Naive thymus-derived CD4-positive, alpha-beta T cell (primary cell): ENCODE measurements at regions of chr2 and their contacts with region 1.

Region 1: DNA sequence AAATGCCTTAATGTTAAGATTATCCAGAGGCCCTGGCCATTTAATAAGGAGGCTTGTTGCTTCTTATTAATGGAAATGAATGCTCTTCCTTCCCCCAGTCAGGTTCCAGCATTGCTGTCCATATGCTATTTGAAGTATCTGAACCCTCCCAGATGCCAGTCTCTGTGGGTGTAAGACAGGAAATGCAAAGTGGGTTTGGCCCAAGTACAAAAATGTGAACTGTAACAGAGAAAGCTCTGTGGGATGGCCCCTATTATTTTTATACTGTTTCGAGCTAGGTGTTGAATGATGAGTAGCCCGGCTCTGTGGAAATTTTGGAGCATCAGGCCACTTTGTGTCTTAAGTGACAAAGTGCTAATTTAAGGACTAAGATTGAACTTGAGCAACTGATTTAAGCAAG is 141.0 kb downstream of the UXS1 start:
- DNase-seq: peak in 5 of 9 donors; percentile 21 to 39 (median 33)
- ATAC-seq: peak; percentile 67
- H3K4me3 ChIP-seq: peak overlapping the region; percentile 28
- H3K4me3 Mint-ChIP-seq: peak overlapping the region in 9 of 10 donors; percentile 10 to 82 (median 74)
- H3K27ac ChIP-seq: no peak overlapping the region
- H3K27ac Mint-ChIP-seq: peak overlapping the region in 7 of 9 donors; percentile 17 to 77 (median 53)
- H3K4me1 ChIP-seq: peaks cover 45 to 64% of the 10 kb centered on the region in 2 donors
- H3K4me1 Mint-ChIP-seq: peaks cover 44 to 83% (median 76%) of the 10 kb centered on the region in 7 donors
- H3K27me3 ChIP-seq: no peaks in the 10 kb centered on the region
- H3K27me3 Mint-ChIP-seq: peaks cover 0 to 5% (median 0%) of the 10 kb centered on the region in 5 donors

Region 2: DNA sequence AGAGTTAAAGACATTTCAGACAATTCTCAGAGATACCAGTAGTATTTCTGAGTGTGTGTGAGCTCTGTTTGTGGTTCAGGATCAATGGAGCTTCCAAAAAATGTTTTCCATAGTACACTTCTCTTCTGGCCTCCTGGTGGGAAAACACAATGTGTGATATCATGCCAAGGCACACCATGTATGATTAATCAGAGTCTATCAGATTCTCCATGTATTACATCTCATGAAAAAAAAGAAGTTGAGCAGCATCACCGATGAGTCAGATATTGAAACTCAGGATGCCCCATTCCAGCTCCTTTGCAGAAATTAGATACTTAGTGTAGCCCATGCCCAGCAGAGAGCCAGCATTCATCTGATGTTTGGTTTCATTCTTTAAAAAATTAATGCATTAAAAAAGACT is 1819.5 kb before region 1 on chr2:
- CTCF ChIA-PET with region 1: no interaction called
- POLR2A ChIA-PET with region 1: no interaction called
- intact Hi-C with region 1: no loop called
- DNase-seq: no peak
- ATAC-seq: no peak
- H3K4me3 ChIP-seq: no peak overlapping the region
- H3K4me3 Mint-ChIP-seq: no peak overlapping the region
- H3K27ac ChIP-seq: no peak overlapping the region
- H3K27ac Mint-ChIP-seq: no peak overlapping the region
- H3K4me1 ChIP-seq: no peaks in the 10 kb centered on the region
- H3K4me1 Mint-ChIP-seq: no peaks in the 10 kb centered on the region
- H3K27me3 ChIP-seq: no peaks in the 10 kb centered on the region
- H3K27me3 Mint-ChIP-seq: no peaks in the 10 kb centered on the region

Region 3: DNA sequence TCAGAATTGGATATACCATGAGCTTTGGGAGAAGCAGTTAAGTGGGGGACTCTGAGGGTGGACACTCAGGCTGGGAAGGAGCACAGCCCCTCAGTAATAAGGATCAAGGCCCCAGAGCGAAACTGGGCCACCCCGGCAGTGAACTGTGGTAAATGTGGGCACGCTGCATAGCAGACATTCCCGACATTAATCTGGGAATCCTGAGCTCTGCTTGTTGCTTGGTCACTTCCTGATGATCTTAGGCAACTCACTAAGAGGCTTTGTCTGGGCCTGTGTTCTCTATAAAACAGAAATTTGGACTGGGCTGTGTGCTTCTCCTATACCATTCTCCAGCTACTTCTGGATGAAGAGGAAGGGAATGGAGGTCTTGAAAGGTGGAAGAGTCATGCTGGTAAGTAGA is 728.4 kb before region 1 on chr2:
- CTCF ChIA-PET with region 1: no interaction called
- POLR2A ChIA-PET with region 1: no interaction called
- intact Hi-C with region 1: no loop called
- DNase-seq: no peak
- ATAC-seq: no peak
- H3K4me3 ChIP-seq: no peak overlapping the region
- H3K4me3 Mint-ChIP-seq: no peak overlapping the region
- H3K27ac ChIP-seq: no peak overlapping the region
- H3K27ac Mint-ChIP-seq: peak overlapping the region in 4 of 9 donors; percentile 3 to 45 (median 28)
- H3K4me1 ChIP-seq: peaks cover 12% of the 10 kb centered on the region in 2 donors
- H3K4me1 Mint-ChIP-seq: peaks cover 33 to 79% (median 71%) of the 10 kb centered on the region in 7 donors
- H3K27me3 ChIP-seq: no peaks in the 10 kb centered on the region
- H3K27me3 Mint-ChIP-seq: no peaks in the 10 kb centered on the region

Region 4: GRCh38 chr2:105969555-105969954 is 83.6 kb before region 1 on chr2:
- CTCF ChIA-PET with region 1: no interaction called
- POLR2A ChIA-PET with region 1: no interaction called
- intact Hi-C with region 1: loop called in 1 of 2 experiments (anchors 5 kb)
- DNase-seq: no peak
- ATAC-seq: no peak
- H3K4me3 ChIP-seq: no peak overlapping the region
- H3K4me3 Mint-ChIP-seq: no peak overlapping the region
- H3K27ac ChIP-seq: no peak overlapping the region
- H3K27ac Mint-ChIP-seq: no peak overlapping the region
- H3K4me1 ChIP-seq: peaks cover 0 to 27% of the 10 kb centered on the region in 2 donors
- H3K4me1 Mint-ChIP-seq: peaks cover 8 to 61% (median 37%) of the 10 kb centered on the region in 7 donors
- H3K27me3 ChIP-seq: no peaks in the 10 kb centered on the region
- H3K27me3 Mint-ChIP-seq: peaks cover 0 to 2% (median 0%) of the 10 kb centered on the region in 5 donors

Region 5: DNA sequence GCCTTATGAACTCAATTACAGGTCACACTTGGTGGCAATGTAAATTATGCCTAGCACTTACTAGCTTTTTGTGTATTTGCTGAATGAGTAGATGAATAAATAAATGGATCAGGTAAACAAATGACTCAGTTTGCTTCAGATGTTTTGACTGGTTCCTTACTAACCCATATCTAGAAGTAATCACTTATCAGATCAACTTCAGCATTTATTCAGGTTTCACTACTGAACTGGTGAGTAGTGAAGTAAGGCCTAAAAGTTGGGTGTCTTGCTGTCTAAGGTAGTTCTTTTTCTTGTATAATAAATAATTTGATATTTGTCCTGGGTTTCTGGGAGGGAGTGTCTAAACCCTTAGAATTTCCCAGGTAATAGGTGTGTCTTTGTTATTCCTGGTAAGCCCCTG is 64.0 kb before region 1 on chr2:
- CTCF ChIA-PET with region 1: no interaction called
- POLR2A ChIA-PET with region 1: no interaction called
- intact Hi-C with region 1: loop called in 1 of 2 experiments (anchors 5 kb)
- DNase-seq: no peak
- ATAC-seq: no peak
- H3K4me3 ChIP-seq: no peak overlapping the region
- H3K4me3 Mint-ChIP-seq: peak overlapping the region in 4 of 10 donors; percentile 21 to 71 (median 44)
- H3K27ac ChIP-seq: no peak overlapping the region
- H3K27ac Mint-ChIP-seq: peak overlapping the region in 2 of 9 donors; percentile 16 to 74
- H3K4me1 ChIP-seq: peaks cover 7 to 27% of the 10 kb centered on the region in 2 donors
- H3K4me1 Mint-ChIP-seq: peaks cover 6 to 89% (median 57%) of the 10 kb centered on the region in 7 donors
- H3K27me3 ChIP-seq: no peaks in the 10 kb centered on the region
- H3K27me3 Mint-ChIP-seq: no peaks in the 10 kb centered on the region

Region 6: DNA sequence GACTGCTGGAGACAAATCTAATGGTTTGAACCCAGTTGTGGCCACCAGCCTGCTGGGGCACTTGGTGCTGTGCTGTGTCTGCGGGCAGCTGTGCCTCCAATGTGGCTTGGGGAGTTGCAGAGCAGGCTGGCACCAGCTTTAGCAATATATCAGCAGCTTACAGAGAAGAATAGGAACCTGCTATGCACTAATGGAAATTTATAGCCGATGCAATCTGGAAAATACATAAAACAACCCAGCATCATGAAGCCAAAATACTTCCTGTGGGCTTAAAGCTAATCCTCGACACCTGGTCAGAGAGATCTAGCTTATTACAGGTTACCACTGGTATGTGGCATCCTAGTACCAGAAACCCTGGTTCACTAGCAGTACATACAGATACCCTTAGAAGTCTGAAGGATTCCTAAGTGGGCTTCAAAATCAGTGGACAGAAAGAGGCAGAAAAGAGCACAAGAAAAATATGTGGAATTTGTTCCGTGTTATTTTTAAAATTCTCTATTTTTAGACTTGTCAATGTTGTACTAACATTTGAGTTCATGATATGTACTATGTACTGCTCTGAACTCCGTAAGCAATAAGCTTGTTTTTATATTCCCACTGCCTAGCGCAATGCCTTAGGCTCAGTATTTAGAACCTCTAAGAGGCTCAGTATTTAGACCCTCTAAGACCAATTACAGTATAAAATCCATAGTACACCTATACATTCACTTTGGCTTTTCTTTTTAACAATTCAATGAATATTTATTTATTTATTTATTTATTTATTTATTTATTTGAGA is 53.7 kb before region 1 on chr2:
- CTCF ChIA-PET with region 1: no interaction called
- POLR2A ChIA-PET with region 1: no interaction called
- intact Hi-C with region 1: no loop called
- DNase-seq: no peak
- ATAC-seq: no peak
- H3K4me3 ChIP-seq: no peak overlapping the region
- H3K4me3 Mint-ChIP-seq: no peak overlapping the region
- H3K27ac ChIP-seq: no peak overlapping the region
- H3K27ac Mint-ChIP-seq: peak overlapping the region in 1 of 9 donors; percentile 17
- H3K4me1 ChIP-seq: no peaks in the 10 kb centered on the region
- H3K4me1 Mint-ChIP-seq: peaks cover 0 to 33% (median 6%) of the 10 kb centered on the region in 7 donors
- H3K27me3 ChIP-seq: no peaks in the 10 kb centered on the region
- H3K27me3 Mint-ChIP-seq: peaks cover 0 to 18% (median 0%) of the 10 kb centered on the region in 5 donors

Region 7: DNA sequence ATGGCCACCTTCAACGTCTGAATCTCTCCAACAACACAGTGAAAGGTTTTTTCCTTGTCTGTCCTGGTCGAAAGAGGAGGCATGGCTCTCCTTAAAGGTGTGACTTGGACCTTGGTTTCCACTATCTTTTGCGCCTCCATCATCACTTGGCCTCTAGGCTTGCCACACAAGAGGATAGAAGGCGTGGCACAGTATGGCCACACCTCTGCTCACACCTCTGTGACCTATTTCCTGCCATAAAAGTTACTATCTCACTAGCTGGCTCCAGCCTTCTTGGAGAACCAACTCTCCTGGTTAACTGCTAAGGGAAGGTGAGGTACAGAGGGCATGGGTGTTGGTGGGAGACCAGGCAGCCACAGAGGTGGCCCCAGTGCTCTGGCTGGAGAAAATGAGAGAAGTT is 24.9 kb before region 1 on chr2:
- CTCF ChIA-PET with region 1: no interaction called
- POLR2A ChIA-PET with region 1: no interaction called
- intact Hi-C with region 1: loop called in 1 of 2 experiments (anchors 2 kb)
- DNase-seq: no peak
- ATAC-seq: peak; percentile 29
- H3K4me3 ChIP-seq: no peak overlapping the region
- H3K4me3 Mint-ChIP-seq: no peak overlapping the region
- H3K27ac ChIP-seq: no peak overlapping the region
- H3K27ac Mint-ChIP-seq: peak overlapping the region in 2 of 9 donors; percentile 4 to 54
- H3K4me1 ChIP-seq: peaks cover 16 to 17% of the 10 kb centered on the region in 2 donors
- H3K4me1 Mint-ChIP-seq: peaks cover 11 to 61% (median 45%) of the 10 kb centered on the region in 7 donors
- H3K27me3 ChIP-seq: no peaks in the 10 kb centered on the region
- H3K27me3 Mint-ChIP-seq: peaks cover 0 to 8% (median 0%) of the 10 kb centered on the region in 5 donors

Region 8: GRCh38 chr2:106065268-106065982 is 12.3 kb after region 1 on chr2:
- CTCF ChIA-PET with region 1: interaction called, 3 read pairs
- POLR2A ChIA-PET with region 1: interaction called, 12 read pairs
- intact Hi-C with region 1: loop called in 1 of 2 experiments (anchors 1 kb)
- DNase-seq: peak in 6 of 9 donors; percentile 17 to 44 (median 34)
- ATAC-seq: peak; percentile 57
- H3K4me3 ChIP-seq: peak overlapping the region; percentile 64
- H3K4me3 Mint-ChIP-seq: peak overlapping the region; percentile 61 to 88 (median 82)
- H3K27ac ChIP-seq: no peak overlapping the region
- H3K27ac Mint-ChIP-seq: peak overlapping the region in 7 of 9 donors; percentile 68 to 95 (median 73)
- H3K4me1 ChIP-seq: peaks cover 0 to 13% of the 10 kb centered on the region in 2 donors
- H3K4me1 Mint-ChIP-seq: peaks cover 4 to 45% (median 37%) of the 10 kb centered on the region in 7 donors
- H3K27me3 ChIP-seq: no peaks in the 10 kb centered on the region
- H3K27me3 Mint-ChIP-seq: peaks cover 0 to 42% (median 5%) of the 10 kb centered on the region in 5 donors